HepG2 (cell line): ENCODE measurements at regions of chr1 and their contacts with region 1.

Region 1: DNA sequence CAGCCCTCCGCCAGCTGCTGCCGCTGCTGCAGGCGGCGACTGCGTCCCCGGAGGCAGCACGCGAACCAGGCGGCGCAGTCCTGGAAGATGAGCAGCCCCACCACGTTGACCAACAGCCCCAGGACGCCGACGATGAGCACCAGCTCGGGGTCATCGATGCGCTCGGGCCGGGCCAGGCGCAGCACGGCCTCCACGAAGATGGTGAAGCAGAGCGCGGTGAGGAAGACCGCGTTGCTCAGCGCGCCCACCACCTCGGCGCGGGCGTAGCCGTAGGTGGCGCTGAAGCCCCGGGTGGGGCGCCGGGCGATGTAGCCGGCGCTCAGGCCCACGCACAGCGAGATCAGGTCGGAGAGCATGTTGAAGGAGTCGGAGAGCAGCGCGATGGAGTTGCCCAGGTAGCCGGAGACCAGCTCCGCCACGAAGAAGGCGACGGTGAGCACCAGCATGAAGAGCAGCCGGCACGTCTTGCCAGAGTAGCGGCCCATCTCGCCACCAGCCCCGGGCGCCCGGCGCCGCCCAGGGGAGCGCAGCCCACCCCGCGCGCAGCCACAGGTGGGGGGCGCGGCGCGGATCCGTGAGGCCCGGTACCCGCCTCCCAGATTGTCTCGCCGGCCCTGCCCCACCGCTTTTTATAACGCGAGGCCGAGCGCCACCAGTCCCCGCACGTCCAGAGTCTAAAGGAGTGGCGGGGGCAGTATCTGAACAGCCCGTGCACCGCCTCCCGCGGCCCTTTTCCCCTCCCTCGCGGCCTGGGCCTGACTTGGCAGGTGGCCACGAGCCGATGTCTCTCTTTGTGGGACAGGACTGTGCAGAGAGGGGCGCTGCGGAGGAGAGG is at the start of gene SLC30A10:
- DNase-seq: peak; percentile 4
- ATAC-seq: peak; percentile 82
- H3K4me3 ChIP-seq: peak within 1 kb of the TSS; percentile 71 to 90 (median 81)
- H3K27ac ChIP-seq: peak within 1 kb of the TSS; percentile 84
- H3K4me1 ChIP-seq: peaks cover 73% of the 10 kb centered on the region
- H3K27me3 ChIP-seq: no peaks in the 10 kb centered on the region; a peak in 1 of 5 replicates
- CTCF ChIP-seq: peak; percentile 74
- EP300 ChIP-seq: 0 out of 4 replicates have a peak, but pooled peaks of 1 of the 2 experiments have one; percentile 11
- POLR2A ChIP-seq: peak; percentile 13 to 59; a peak in 2 of 4 replicates
- RAD21 ChIP-seq: peak; percentile 41; the same call in 1 of the 2 replicates
- total RNA-seq, gene SLC30A10: 14.7 and 30.2 TPM in 2 replicates

Region 2: GRCh38 chr1:219883400-219884332 is 44.5 kb before region 1 on chr1:
- CTCF ChIA-PET with region 1: no interaction called
- POLR2A ChIA-PET with region 1: interaction called, 15 read pairs
- in situ Hi-C with region 1: no loop called
- intact Hi-C with region 1: loop called (anchors 2 kb)
- DNase-seq: peak; percentile 76
- ATAC-seq: peak; percentile 100
- H3K4me3 ChIP-seq: peak overlapping the region in 2 of 3 experiments; percentile 4 to 14; a peak in 3 of 6 replicates
- H3K27ac ChIP-seq: peak overlapping the region; percentile 75
- H3K4me1 ChIP-seq: peaks cover 48% of the 10 kb centered on the region
- H3K27me3 ChIP-seq: no peaks in the 10 kb centered on the region
- CTCF ChIP-seq: no peak
- EP300 ChIP-seq: peak in 1 of 2 experiments; percentile 86; a peak in 2 of 4 replicates
- POLR2A ChIP-seq: no peak
- RAD21 ChIP-seq: 0 out of 2 replicates have a peak, but pooled peaks have one; percentile 26

Region 3: GRCh38 chr1:219954736-219955421 is 26.7 kb after region 1 on chr1:
- CTCF ChIA-PET with region 1: no interaction called
- POLR2A ChIA-PET with region 1: interaction called, 5 read pairs
- in situ Hi-C with region 1: no loop called
- intact Hi-C with region 1: loop called (anchors 2 kb)
- DNase-seq: peak; percentile 52
- ATAC-seq: peak; percentile 88
- H3K4me3 ChIP-seq: peak overlapping the region; percentile 22 to 57 (median 55); a peak in 4 of 6 replicates
- H3K27ac ChIP-seq: peak overlapping the region; percentile 65
- H3K4me1 ChIP-seq: peaks cover 20% of the 10 kb centered on the region; the same call in 1 of the 2 replicates
- H3K27me3 ChIP-seq: no peaks in the 10 kb centered on the region
- CTCF ChIP-seq: no peak
- EP300 ChIP-seq: peak in 1 of 2 experiments; percentile 49; a peak in 2 of 4 replicates
- POLR2A ChIP-seq: no peak
- RAD21 ChIP-seq: no peak

Region 4: GRCh38 chr1:220001095-220001501 is 72.9 kb after region 1 on chr1:
- CTCF ChIA-PET with region 1: no interaction called
- POLR2A ChIA-PET with region 1: no interaction called
- in situ Hi-C with region 1: no loop called
- intact Hi-C with region 1: no loop called
- DNase-seq: no peak
- ATAC-seq: no peak
- H3K4me3 ChIP-seq: no peak overlapping the region
- H3K27ac ChIP-seq: no peak overlapping the region
- H3K4me1 ChIP-seq: no peaks in the 10 kb centered on the region
- H3K27me3 ChIP-seq: no peaks in the 10 kb centered on the region
- CTCF ChIP-seq: no peak
- EP300 ChIP-seq: no peak
- POLR2A ChIP-seq: no peak
- RAD21 ChIP-seq: no peak